Activated CD4-positive, alpha-beta T cell treated with anti-CD3 and anti-CD28 coated beads for 36 hours (primary cell): ENCODE measurements at regions of chr20 and their contacts with region 1.

Region 1: DNA sequence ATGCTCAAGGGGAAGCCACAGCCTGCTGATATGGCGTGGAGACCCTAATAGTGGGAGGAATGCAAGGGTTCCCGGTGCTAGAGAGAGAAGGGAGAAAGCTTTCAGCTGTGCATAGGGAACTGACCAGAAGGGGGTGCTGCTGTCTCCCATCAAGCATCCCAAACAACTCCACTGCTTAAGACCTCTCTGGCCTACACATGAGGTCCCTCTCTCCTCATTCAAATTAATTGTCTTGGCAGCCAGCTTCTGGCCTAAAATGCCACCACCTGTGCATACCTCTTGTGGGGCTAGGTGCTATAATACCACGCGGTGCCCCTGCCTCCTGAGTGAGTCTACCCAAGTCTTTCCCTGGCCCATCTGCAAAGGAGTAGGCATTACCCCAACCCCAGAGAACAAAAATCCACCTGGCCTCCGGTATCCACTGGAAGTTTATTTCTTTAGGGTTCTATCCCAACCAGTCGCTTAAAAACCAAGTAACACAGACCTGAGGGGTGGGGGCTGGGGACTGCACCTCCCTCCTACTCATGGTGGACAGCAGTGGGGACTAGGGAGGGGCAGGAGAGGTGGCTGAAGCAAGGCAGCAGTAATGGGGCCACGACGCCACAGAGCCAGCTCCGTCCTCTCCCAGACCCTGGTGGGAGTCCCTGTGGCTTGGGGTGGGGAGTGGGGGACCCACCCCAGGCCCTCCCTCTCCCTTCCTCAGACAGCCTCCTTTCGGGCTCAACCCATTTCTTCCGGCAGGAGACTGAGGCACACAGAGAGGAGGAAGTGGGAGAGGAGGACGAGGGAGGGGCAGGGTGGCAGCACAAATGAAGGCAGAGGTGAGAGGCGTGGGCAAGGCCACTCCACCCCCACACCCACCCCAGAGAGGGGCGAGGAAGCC is 14.2 kb downstream of the ADISSP start:
- DNase-seq: peak; percentile 78
- ATAC-seq: peak; percentile 61
- H3K4me3 Mint-ChIP-seq: no peak overlapping the region
- H3K27ac Mint-ChIP-seq: no peak overlapping the region
- H3K4me1 Mint-ChIP-seq: peaks cover 7% of the 10 kb centered on the region
- H3K27me3 Mint-ChIP-seq: peaks cover 3% of the 10 kb centered on the region

Region 2: DNA sequence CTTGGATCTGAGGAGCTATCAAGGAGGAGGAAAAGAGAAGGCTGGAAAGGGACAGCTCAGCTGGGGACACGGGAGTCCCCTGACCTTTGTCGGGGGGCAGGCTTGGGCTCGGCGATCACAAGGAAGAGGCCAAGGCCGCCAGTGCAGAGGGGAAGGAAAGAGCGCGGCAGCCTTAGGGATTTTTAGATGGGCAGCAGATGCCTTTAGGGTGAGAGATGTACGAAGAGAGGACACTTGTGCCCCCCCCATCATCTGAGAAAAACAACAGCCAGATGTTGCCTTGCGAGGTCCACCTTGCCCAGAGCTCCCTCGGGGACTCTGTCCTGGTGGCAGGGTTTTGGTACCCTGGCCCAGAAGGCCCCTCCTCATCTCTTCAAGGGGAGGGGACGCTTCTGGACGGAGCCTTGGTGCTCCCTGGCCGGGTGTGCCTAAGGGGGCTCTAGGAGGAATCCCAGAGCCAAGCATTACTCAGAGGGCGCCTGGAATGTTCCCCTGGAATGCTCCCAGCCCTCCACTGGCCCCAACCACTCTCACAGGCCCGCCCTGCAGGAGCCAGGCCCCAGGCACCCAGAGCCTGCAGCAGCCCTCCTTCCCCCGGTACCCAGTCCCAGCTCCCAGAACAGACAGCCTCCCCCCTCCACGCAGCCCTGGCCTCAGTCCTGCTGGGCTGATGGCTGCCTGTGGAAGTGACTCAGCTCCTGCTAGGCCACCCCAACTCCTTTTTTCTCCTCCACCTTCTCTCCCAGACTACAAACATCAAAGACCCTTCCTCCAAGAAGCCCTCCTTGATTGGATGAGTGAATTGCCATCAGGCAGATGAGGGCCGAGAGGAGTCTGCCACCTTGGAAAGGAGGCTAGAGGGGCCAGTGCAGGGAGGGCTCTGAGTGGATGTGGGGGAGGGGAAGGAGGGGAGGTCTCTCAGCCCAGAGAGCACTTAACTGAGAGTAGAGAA is 73.3 kb before region 1 on chr20:
- CTCF ChIA-PET with region 1: interaction called, 6 read pairs
- POLR2A ChIA-PET with region 1: no interaction called
- intact Hi-C with region 1: loop called in 1 of 2 experiments (anchors 1 kb)
- DNase-seq: no peak
- ATAC-seq: no peak
- H3K4me3 Mint-ChIP-seq: no peak overlapping the region
- H3K27ac Mint-ChIP-seq: no peak overlapping the region
- H3K4me1 Mint-ChIP-seq: peaks cover 6% of the 10 kb centered on the region
- H3K27me3 Mint-ChIP-seq: peaks cover 37% of the 10 kb centered on the region

Region 3: GRCh38 chr20:3696200-3696599 is 57.1 kb before region 1 on chr20:
- CTCF ChIA-PET with region 1: no interaction called
- POLR2A ChIA-PET with region 1: interaction called, 16 read pairs
- intact Hi-C with region 1: no loop called
- DNase-seq: peak; percentile 27
- ATAC-seq: no peak
- H3K4me3 Mint-ChIP-seq: no peak overlapping the region
- H3K27ac Mint-ChIP-seq: no peak overlapping the region
- H3K4me1 Mint-ChIP-seq: no peaks in the 10 kb centered on the region
- H3K27me3 Mint-ChIP-seq: no peaks in the 10 kb centered on the region

Region 4: DNA sequence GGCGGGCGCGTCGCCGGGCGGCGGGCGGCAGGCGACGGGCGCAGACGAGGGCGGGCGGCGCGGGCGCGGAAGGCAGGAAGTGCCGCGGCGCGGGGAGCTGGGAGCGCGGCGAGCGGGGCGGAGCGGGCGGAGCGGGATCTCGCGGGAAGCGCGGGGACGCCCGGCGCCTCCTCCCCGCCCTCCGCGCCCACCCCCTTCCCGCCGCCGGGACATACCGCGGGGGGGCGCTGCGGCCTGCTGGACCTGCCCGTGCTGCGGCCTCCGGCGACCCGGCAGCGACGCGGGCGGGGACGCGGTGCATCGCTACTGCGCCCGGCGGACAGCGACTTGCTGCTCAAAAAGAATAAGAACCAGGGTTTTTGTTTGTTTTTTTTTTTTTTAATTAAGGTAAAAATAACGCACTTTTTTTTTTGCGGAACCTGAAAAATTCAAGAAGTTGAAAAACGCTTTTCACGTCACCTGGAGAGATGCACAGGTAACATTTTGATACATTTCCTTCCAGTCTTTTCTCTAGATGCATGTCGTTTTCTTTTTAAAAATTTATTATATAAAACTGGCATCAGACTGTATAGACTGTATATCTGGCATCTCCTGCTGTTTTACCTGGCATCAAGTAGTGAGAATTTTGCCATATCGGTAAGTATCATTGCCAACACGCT is 33.5 kb after region 1 on chr20 and contains the start of gene CENPB:
- CTCF ChIA-PET with region 1: no interaction called
- POLR2A ChIA-PET with region 1: no interaction called
- intact Hi-C with region 1: loop called in 1 of 2 experiments (anchors 2 kb)
- DNase-seq: peak; percentile 95
- ATAC-seq: peak; percentile 89
- H3K4me3 Mint-ChIP-seq: peak within 1 kb of the TSS; percentile 77
- H3K27ac Mint-ChIP-seq: peak within 1 kb of the TSS; percentile 84
- H3K4me1 Mint-ChIP-seq: peaks cover 39% of the 10 kb centered on the region
- H3K27me3 Mint-ChIP-seq: no peaks in the 10 kb centered on the region
- total RNA-seq, gene CENPB: 46.2 to 48.3 TPM

Region 5: GRCh38 chr20:3820048-3820900 is 66.9 kb after region 1 on chr20 and contains the start of gene AP5S1:
- CTCF ChIA-PET with region 1: interaction called, 3 read pairs
- POLR2A ChIA-PET with region 1: no interaction called
- intact Hi-C with region 1: loop called in 1 of 2 experiments (anchors 1 kb)
- DNase-seq: peak; percentile 96
- ATAC-seq: peak; percentile 86
- H3K4me3 Mint-ChIP-seq: peak within 1 kb of the TSS; percentile 89
- H3K27ac Mint-ChIP-seq: peak within 1 kb of the TSS; percentile 96
- H3K4me1 Mint-ChIP-seq: peaks cover 33% of the 10 kb centered on the region
- H3K27me3 Mint-ChIP-seq: no peaks in the 10 kb centered on the region
- total RNA-seq, gene AP5S1: 9.1 to 11.3 TPM

Region 6: DNA sequence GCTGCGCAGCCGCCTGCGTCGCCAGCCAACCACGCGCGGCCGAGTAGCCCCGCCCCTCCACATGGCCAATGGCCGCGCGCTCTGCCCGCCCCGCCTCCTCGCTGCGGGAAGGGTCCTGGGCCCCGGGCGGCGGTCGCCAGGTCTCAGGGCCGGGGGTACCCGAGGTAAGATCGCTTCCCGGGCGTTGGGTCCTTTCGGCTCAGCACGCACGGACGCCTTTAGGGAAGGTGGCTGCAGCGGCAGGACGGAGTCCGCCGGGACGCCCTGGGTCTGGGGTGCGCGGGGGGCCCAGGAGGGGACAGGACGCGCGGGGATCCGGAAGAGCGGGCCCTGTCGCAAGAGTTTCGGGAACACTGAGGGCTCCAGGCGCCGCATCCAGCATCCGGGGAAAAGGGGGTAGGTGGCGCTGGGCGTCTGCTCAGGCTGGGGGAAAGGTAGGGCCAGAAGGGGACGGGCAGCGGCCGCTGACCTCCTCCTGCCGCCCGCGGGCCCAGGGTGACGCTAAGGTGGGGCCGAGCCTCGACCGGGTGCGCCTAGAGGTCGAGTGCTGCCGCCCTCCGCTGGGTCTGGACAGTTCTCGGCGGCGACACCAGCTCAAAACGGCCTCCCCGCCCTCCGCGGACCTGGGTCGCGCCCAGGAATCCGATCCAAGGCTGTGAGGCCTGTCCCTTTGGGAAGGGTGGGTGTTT is 93.5 kb after region 1 on chr20 and contains the start of gene MAVS:
- CTCF ChIA-PET with region 1: interaction called, 3 read pairs
- POLR2A ChIA-PET with region 1: no interaction called
- intact Hi-C with region 1: loop called in 1 of 2 experiments (anchors 2 kb)
- DNase-seq: peak; percentile 91
- ATAC-seq: peak; percentile 98
- H3K4me3 Mint-ChIP-seq: peak within 1 kb of the TSS; percentile 88
- H3K27ac Mint-ChIP-seq: peak within 1 kb of the TSS; percentile 84
- H3K4me1 Mint-ChIP-seq: peaks cover 22% of the 10 kb centered on the region
- H3K27me3 Mint-ChIP-seq: no peaks in the 10 kb centered on the region
- total RNA-seq, gene MAVS: 23.2 to 25.9 TPM

Region 7: DNA sequence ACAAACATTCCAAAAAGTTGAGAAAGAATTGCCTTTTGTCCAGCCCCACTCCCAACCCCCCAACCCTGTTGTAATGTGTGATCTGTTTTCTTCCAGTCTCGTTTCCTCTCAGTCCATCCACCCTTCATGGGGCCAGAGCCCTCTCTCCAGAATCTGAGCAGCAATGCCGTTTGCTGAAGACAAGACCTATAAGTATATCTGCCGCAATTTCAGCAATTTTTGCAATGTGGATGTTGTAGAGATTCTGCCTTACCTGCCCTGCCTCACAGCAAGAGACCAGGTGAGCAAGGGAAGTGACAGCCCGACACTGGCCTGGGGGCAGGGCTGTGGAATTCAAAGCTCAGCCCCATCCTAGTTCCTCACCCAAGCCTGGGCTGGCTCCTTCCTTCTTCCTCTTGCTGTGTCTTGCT is 101.1 kb after region 1 on chr20:
- CTCF ChIA-PET with region 1: interaction called, 7 read pairs
- POLR2A ChIA-PET with region 1: no interaction called
- intact Hi-C with region 1: loop called in 1 of 2 experiments (anchors 1 kb)
- DNase-seq: no peak
- ATAC-seq: no peak
- H3K4me3 Mint-ChIP-seq: no peak overlapping the region
- H3K27ac Mint-ChIP-seq: no peak overlapping the region
- H3K4me1 Mint-ChIP-seq: peaks cover 4% of the 10 kb centered on the region
- H3K27me3 Mint-ChIP-seq: no peaks in the 10 kb centered on the region